ENCODE measurements at regions of chr10 and their contacts with region 1.

Region 1: DNA sequence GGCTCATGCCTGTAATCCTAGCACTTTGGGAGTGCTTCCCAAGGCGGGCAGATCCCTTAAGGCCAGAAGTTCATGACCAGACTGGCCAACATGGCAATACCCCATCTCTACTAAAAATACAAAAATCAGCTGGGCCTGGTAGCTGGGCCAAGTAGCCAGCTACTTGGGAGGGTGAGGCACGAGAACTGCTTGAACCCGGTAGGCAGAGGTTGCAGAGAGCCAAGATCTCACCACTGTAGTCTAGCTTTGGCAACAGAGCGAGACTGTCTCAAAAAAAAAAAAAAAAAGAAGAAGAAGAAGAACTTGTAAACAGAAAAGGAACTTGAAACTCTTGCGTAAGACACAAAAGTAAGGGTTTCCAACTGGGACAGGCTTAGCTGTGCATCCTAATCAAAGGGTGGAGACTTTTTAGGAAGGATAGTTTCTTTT is 5.6 kb upstream of the IFIT2 start:
- DNase-seq: no peak
- ATAC-seq: no peak
- H3K4me3 Mint-ChIP-seq: no peak overlapping the region
- H3K27ac Mint-ChIP-seq: no peak overlapping the region
- H3K4me1 Mint-ChIP-seq: peaks cover 18% of the 10 kb centered on the region
- H3K27me3 Mint-ChIP-seq: no peaks in the 10 kb centered on the region

Region 2: DNA sequence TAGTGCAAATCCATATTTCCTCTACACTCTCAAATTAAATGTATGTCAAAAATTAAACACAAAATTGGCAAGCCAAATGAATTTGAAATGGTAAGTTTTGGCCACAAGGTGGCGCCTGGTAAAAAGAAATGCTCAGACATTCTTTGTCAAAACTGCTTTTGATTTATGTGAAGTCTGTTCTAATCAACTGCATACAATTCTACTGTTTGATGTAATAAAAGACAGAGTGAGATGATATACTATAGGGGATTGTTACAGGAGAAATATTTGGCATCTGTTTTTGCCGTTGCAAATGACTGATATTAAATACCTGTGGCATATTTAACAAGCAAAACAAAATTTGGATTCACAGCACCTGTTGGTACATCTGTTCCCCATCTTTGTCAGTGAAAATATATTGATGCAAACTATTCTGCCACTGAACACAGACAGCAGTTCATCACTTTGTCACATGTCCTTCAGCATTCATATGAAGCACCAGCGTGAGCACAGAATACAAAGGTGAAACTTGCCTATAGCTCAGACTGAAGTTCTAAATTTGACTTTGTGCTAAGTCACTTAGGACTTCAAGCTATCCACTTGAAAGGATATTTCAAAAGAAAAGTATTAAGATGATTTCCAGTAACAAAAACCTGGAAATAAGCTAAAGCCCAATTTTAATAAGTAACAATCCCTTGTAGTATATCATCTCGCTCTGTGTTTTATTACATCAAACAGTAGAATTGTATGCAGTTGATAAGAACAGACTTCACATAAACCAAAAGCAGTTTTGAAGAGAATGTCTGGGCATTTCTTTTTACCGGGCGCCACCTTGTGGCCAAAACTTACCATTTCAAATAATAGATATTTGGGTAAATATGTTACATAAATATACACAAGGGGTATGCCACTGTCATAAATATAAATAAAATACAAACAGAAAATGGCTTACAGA is 78.9 kb before region 1 on chr10:
- CTCF ChIA-PET with region 1: no interaction called
- POLR2A ChIA-PET with region 1: no interaction called
- intact Hi-C with region 1: no loop called
- DNase-seq: peak; percentile 76
- ATAC-seq: peak; percentile 55
- H3K4me3 Mint-ChIP-seq: no peak overlapping the region
- H3K27ac Mint-ChIP-seq: no peak overlapping the region
- H3K4me1 Mint-ChIP-seq: peaks cover 9% of the 10 kb centered on the region
- H3K27me3 Mint-ChIP-seq: no peaks in the 10 kb centered on the region

Region 3: GRCh38 chr10:89369156-89370105 is 73.2 kb after region 1 on chr10:
- CTCF ChIA-PET with region 1: no interaction called
- POLR2A ChIA-PET with region 1: no interaction called
- intact Hi-C with region 1: loop called (anchors 1 to 2 kb)
- DNase-seq: peak; percentile 15
- ATAC-seq: no peak
- H3K4me3 Mint-ChIP-seq: no peak overlapping the region
- H3K27ac Mint-ChIP-seq: no peak overlapping the region
- H3K4me1 Mint-ChIP-seq: peaks cover 16% of the 10 kb centered on the region
- H3K27me3 Mint-ChIP-seq: peaks cover 4% of the 10 kb centered on the region

Measured in activated CD4-positive, alpha-beta T cell treated with anti-CD3 and anti-CD28 coated beads for 36 hours (primary cell).